H1 (cell line): ENCODE measurements at regions of chr4 and their contacts with region 1.

Region 1: DNA sequence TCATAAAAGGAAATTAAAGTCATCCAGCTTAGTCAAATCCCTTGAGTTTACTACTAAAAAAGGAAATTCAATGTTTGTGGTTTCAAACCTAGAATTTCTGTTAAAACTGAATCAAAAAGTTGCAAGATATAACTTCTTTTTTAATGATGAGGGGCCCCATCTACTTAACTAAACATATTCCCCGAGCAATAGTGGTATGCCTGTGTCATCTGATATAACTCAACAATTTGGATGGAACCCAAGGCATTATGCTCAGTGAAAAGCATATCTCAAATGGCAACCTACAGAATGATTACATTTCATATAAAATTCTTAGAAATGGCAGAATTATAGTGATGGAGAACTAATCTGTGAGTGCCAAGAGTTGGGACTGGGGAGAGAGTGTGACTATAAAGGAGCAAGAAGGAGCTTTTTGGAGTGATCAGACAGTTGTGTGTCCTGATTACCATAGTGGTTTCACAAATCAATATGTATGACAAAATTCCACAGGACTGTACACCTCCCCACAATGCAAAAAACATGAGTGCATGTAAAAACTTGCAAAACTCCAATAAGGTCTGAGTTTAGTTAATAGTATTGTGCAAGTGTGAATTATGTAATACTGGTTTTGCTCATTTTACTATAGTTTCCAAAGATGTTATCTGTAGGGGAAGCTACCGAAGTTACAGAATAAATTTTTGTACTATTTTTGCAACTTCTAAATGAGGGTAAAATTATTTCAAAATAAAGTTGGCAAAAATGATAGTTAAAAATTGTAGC is 323.2 kb downstream of the ARHGAP24 start:
- DNase-seq: no peak
- H3K4me3 ChIP-seq: no peak overlapping the region
- H3K27ac ChIP-seq: no peak overlapping the region
- H3K4me1 ChIP-seq: no peaks in the 10 kb centered on the region
- H3K27me3 ChIP-seq: no peaks in the 10 kb centered on the region
- CTCF ChIP-seq: no peak
- EP300 ChIP-seq: no peak
- POLR2A ChIP-seq: no peak
- RAD21 ChIP-seq: no peak

Region 2: DNA sequence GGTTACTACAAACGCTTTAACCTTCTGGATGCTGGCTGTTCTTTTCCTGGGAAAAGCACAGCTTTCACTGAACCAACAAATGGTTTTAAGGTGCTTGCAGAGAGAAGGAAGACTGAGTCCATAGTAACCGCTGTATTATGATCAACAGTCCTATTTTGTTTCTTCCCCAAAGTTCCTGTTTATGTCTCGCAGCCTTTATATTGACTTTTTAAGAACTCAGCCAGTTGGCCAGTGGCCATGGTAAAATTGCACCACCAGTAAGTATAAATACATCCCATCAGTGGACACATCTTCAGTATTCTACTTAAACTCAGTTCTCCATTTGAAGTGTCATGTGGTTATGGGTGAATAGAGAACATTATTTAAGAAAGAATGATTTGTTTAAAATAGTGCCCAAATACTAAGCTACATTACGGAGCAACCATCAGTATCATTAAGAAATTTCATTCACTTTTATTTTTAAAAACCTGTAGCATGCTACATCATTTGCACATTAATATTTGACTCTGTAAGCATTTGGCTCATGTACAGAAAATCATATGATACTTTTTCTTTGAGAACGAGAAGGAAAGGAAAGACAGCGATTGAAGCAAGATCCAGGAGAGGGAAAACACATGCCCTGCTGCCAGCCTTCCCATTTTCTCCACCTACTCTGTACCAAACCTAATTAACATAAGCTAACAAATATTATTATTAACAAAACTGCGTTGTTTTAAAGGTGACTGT is 36.2 kb before region 1 on chr4:
- CTCF ChIA-PET with region 1: interaction called, 14 read pairs
- POLR2A ChIA-PET with region 1: no interaction called
- DNase-seq: no peak
- H3K4me3 ChIP-seq: no peak overlapping the region
- H3K27ac ChIP-seq: no peak overlapping the region
- H3K4me1 ChIP-seq: 0 out of 7 replicates have a peak, but pooled peaks cover 0 to 4% (median 0%) of the 10 kb centered on the region in 4 experiments
- H3K27me3 ChIP-seq: no peaks in the 10 kb centered on the region
- CTCF ChIP-seq: no peak
- EP300 ChIP-seq: no peak
- POLR2A ChIP-seq: no peak
- RAD21 ChIP-seq: no peak

Region 3: GRCh38 chr4:85778632-85779131 is 19.5 kb before region 1 on chr4:
- CTCF ChIA-PET with region 1: interaction called, 17 read pairs
- POLR2A ChIA-PET with region 1: no interaction called
- DNase-seq: no peak
- H3K4me3 ChIP-seq: no peak overlapping the region
- H3K27ac ChIP-seq: no peak overlapping the region
- H3K4me1 ChIP-seq: peaks cover 0 to 5% (median 0%) of the 10 kb centered on the region in 4 experiments; a peak in 2 of 7 replicates
- H3K27me3 ChIP-seq: no peaks in the 10 kb centered on the region
- CTCF ChIP-seq: no peak
- EP300 ChIP-seq: no peak
- POLR2A ChIP-seq: no peak
- RAD21 ChIP-seq: no peak

Region 4: GRCh38 chr4:85787138-85787537 is 11.1 kb before region 1 on chr4:
- CTCF ChIA-PET with region 1: interaction called, 19 read pairs
- POLR2A ChIA-PET with region 1: no interaction called
- DNase-seq: no peak
- H3K4me3 ChIP-seq: no peak overlapping the region
- H3K27ac ChIP-seq: no peak overlapping the region
- H3K4me1 ChIP-seq: no peaks in the 10 kb centered on the region
- H3K27me3 ChIP-seq: no peaks in the 10 kb centered on the region
- CTCF ChIP-seq: no peak
- EP300 ChIP-seq: no peak
- POLR2A ChIP-seq: no peak
- RAD21 ChIP-seq: no peak

Region 5: GRCh38 chr4:85842540-85842939 is 44.3 kb after region 1 on chr4:
- CTCF ChIA-PET with region 1: interaction called, 17 read pairs
- POLR2A ChIA-PET with region 1: interaction called, 3 read pairs
- DNase-seq: no peak
- H3K4me3 ChIP-seq: no peak overlapping the region
- H3K27ac ChIP-seq: no peak overlapping the region
- H3K4me1 ChIP-seq: no peaks in the 10 kb centered on the region
- H3K27me3 ChIP-seq: no peaks in the 10 kb centered on the region
- CTCF ChIP-seq: no peak
- EP300 ChIP-seq: no peak
- POLR2A ChIP-seq: no peak
- RAD21 ChIP-seq: no peak

Region 6: GRCh38 chr4:85968945-85969819 is 171.0 kb after region 1 on chr4:
- CTCF ChIA-PET with region 1: interaction called, 53 read pairs
- POLR2A ChIA-PET with region 1: no interaction called
- DNase-seq: no peak
- H3K4me3 ChIP-seq: no peak overlapping the region
- H3K27ac ChIP-seq: no peak overlapping the region
- H3K4me1 ChIP-seq: no peaks in the 10 kb centered on the region
- H3K27me3 ChIP-seq: no peaks in the 10 kb centered on the region
- CTCF ChIP-seq: peak in 2 of 3 experiments; percentile 46 to 54; a peak in 2 of 4 replicates
- EP300 ChIP-seq: no peak
- POLR2A ChIP-seq: no peak
- RAD21 ChIP-seq: peak; percentile 75 to 79

Region 7: GRCh38 chr4:86043755-86044592 is 245.8 kb after region 1 on chr4:
- CTCF ChIA-PET with region 1: interaction called, 12 read pairs
- POLR2A ChIA-PET with region 1: no interaction called
- DNase-seq: no peak
- H3K4me3 ChIP-seq: no peak overlapping the region
- H3K27ac ChIP-seq: no peak overlapping the region
- H3K4me1 ChIP-seq: no peaks in the 10 kb centered on the region
- H3K27me3 ChIP-seq: no peaks in the 10 kb centered on the region
- CTCF ChIP-seq: peak in 2 of 3 experiments; percentile 46 to 47; a peak in 3 of 4 replicates
- EP300 ChIP-seq: no peak
- POLR2A ChIP-seq: no peak
- RAD21 ChIP-seq: peak; percentile 69 to 73